ENCODE measurements at regions of chr17 and their contacts with region 1.

Region 1: GRCh38 chr17:29369831-29370735 is 20.1 kb upstream of the TAOK1 start:
- DNase-seq: peak; percentile 91
- H3K4me3 ChIP-seq: peak overlapping the region in 1 of 3 experiments; percentile 65
- H3K27ac ChIP-seq: no peak overlapping the region
- H3K4me1 ChIP-seq: no peaks in the 10 kb centered on the region
- H3K27me3 ChIP-seq: no peaks in the 10 kb centered on the region
- CTCF ChIP-seq: peak; percentile 59 to 63
- POLR2A ChIP-seq: no peak

Region 2: GRCh38 chr17:29347831-29348629 is 22.1 kb before region 1 on chr17:
- CTCF ChIA-PET with region 1: interaction called, 11 read pairs
- POLR2A ChIA-PET with region 1: interaction called, 7 read pairs
- dilution Hi-C with region 1: no loop called
- intact Hi-C with region 1: no loop called
- DNase-seq: no peak
- H3K4me3 ChIP-seq: no peak overlapping the region
- H3K27ac ChIP-seq: no peak overlapping the region
- H3K4me1 ChIP-seq: no peaks in the 10 kb centered on the region
- H3K27me3 ChIP-seq: peaks cover 8 to 10% of the 10 kb centered on the region in 2 experiments
- CTCF ChIP-seq: no peak
- POLR2A ChIP-seq: no peak

Region 3: GRCh38 chr17:29412780-29413565 is 42.9 kb after region 1 on chr17:
- CTCF ChIA-PET with region 1: interaction called, 10 read pairs
- POLR2A ChIA-PET with region 1: no interaction called
- dilution Hi-C with region 1: no loop called
- intact Hi-C with region 1: no loop called
- DNase-seq: peak; percentile 80
- H3K4me3 ChIP-seq: no peak overlapping the region
- H3K27ac ChIP-seq: peak overlapping the region; percentile 53
- H3K4me1 ChIP-seq: peaks cover 22% of the 10 kb centered on the region
- H3K27me3 ChIP-seq: no peaks in the 10 kb centered on the region
- CTCF ChIP-seq: no peak
- POLR2A ChIP-seq: no peak

Region 4: DNA sequence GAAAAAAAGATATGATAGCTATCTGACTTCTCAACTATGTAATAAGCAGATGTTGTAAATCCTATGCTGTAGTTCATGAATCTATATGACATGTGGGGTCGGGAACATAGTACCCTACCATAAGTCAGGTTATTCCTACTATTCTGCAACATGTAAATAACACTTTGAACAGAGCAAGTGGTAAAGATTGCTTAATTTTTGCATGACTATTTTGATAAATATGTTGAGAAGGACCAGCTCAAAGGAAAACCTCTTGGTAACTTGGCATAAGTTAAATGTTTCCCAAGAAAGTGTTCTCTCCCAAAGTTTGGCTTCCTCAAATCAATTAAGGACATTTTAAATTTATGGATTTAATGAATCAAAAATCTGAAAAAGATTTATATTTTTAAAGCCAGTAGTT is 134.6 kb after region 1 on chr17:
- CTCF ChIA-PET with region 1: interaction called, 12 read pairs
- POLR2A ChIA-PET with region 1: no interaction called
- dilution Hi-C with region 1: no loop called
- intact Hi-C with region 1: no loop called
- DNase-seq: no peak
- H3K4me3 ChIP-seq: no peak overlapping the region
- H3K27ac ChIP-seq: no peak overlapping the region
- H3K4me1 ChIP-seq: no peaks in the 10 kb centered on the region
- H3K27me3 ChIP-seq: no peaks in the 10 kb centered on the region
- CTCF ChIP-seq: no peak
- POLR2A ChIP-seq: no peak

Region 5: DNA sequence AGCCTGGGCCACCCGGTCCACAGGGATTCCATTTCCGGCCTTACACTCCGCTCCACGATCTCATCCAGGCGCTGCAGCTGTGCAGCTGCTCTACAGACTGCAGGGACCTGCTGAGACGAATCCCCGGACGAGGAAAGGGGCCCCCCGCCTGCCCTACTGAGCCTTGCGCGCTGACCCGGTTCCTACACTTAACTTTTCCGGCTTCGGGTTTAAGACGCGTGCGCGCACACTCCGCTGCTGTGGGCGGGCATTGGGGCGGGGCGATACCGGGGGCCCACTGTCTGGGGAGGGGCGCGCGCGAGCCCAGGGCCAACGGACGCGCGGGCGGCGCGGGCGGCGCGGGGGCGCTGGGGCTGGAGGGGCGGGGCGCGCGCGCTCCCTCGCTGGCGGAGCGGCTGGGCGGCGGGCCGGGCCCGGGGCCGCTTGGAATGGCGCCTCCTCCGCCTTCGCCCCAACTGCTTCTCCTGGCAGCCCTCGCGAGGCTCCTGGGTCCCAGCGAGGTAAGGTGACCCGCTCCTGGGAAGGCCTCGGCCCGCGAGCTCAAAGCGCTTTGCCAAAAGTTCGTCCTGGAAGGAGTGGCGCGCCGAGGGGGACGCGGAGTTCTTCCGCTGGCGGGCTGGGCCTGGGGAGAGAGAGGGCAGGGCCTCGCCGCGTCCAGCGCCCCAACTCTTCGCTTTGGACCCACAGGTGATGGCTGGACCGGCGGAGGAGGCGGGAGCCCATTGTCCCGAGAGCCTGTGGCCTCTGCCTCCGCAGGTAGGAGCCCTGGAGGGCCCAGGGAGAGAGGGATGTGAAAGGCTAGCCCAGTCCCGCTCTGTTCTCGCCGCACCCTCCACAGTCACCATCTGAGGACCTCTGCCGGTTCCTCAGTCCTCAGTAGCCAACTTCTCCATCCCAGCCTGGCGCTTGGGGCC is 198.5 kb after region 1 on chr17 and contains the start of gene TP53I13:
- CTCF ChIA-PET with region 1: interaction called, 105 read pairs
- POLR2A ChIA-PET with region 1: no interaction called
- dilution Hi-C with region 1: no loop called
- intact Hi-C with region 1: loop called (anchors 1 kb)
- DNase-seq: peak; percentile 82
- H3K4me3 ChIP-seq: peak within 1 kb of the TSS; percentile 46 to 77 (median 70)
- H3K27ac ChIP-seq: peak within 1 kb of the TSS; percentile 24
- H3K4me1 ChIP-seq: peaks cover 26% of the 10 kb centered on the region
- H3K27me3 ChIP-seq: no peaks in the 10 kb centered on the region
- CTCF ChIP-seq: no peak
- POLR2A ChIP-seq: peak; percentile 57
- total RNA-seq, gene TP53I13: 33.8 and 41.1 TPM in 2 replicates

Region 6: GRCh38 chr17:30093463-30094147 is 723.5 kb after region 1 on chr17:
- CTCF ChIA-PET with region 1: interaction called, 8 read pairs
- POLR2A ChIA-PET with region 1: no interaction called
- dilution Hi-C with region 1: no loop called
- intact Hi-C with region 1: loop called (anchors 10 kb)
- DNase-seq: peak; percentile 72
- H3K4me3 ChIP-seq: no peak overlapping the region
- H3K27ac ChIP-seq: no peak overlapping the region
- H3K4me1 ChIP-seq: no peaks in the 10 kb centered on the region
- H3K27me3 ChIP-seq: no peaks in the 10 kb centered on the region
- CTCF ChIP-seq: peak; percentile 52 to 80
- POLR2A ChIP-seq: no peak

Measured in endothelial cell of umbilical vein (primary cell).